ENCODE measurements at regions of chr3 and their contacts with region 1.

Region 1: GRCh38 chr3:101868534-101869464 is 19.5 kb downstream of the NFKBIZ start:
- DNase-seq: no peak

Region 2: DNA sequence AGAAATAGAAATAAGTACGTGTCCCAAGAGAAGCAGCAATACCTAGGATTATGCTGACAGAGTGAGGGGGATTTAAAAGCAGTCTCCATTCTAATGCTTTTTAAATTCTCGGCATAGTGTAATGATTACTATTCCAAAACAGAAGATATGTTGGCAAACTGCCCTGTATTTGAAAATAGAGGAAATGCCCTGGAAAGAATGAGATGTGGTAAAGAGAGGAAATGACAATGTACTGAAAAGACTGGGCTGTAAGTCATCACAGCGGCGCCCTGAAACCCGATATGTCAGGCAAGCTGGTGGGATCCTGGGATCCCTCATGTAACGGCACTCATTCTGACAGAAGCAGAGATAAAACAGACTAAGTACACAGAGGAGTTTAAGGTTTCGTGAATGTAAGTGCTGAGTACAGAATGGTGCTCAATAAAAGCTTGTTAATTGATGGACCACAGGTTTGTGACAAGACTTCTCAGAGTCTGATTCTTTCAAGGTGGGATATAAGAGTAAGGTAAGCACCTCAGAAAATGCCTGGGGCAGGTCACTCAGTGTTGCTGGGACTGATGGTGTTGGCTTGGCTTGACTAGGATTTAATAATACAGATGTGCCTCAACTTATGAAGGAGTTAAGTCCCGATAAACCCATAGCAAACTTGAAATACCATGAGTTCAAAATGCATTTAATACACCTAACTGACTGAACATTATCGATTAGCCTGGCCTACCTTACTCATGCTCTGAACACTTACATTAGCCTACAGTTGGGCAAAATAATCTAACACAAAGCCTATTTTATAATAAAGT is 71.9 kb after region 1 on chr3:
- intact Hi-C with region 1: loop called in 1 of 2 experiments (anchors 2 kb)
- DNase-seq: no peak